Endothelial cell of umbilical vein (primary cell): ENCODE measurements at regions of chr1 and their contacts with region 1.

Region 1: GRCh38 chr1:31564134-31564989 is 12.0 kb upstream of the TINAGL1 start:
- DNase-seq: peak; percentile 83
- H3K4me3 ChIP-seq: no peak overlapping the region
- H3K27ac ChIP-seq: no peak overlapping the region
- H3K4me1 ChIP-seq: peaks cover 19% of the 10 kb centered on the region
- H3K27me3 ChIP-seq: no peaks in the 10 kb centered on the region
- CTCF ChIP-seq: peak; percentile 74 to 76
- POLR2A ChIP-seq: no peak

Region 2: GRCh38 chr1:31593770-31594632 is 29.6 kb after region 1 on chr1:
- CTCF ChIA-PET with region 1: interaction called, 73 read pairs
- POLR2A ChIA-PET with region 1: no interaction called
- dilution Hi-C with region 1: no loop called
- intact Hi-C with region 1: loop called (anchors 1 kb)
- DNase-seq: peak; percentile 73
- H3K4me3 ChIP-seq: no peak overlapping the region
- H3K27ac ChIP-seq: no peak overlapping the region
- H3K4me1 ChIP-seq: peaks cover 28% of the 10 kb centered on the region
- H3K27me3 ChIP-seq: no peaks in the 10 kb centered on the region
- CTCF ChIP-seq: peak; percentile 95 to 96
- POLR2A ChIP-seq: no peak

Region 3: DNA sequence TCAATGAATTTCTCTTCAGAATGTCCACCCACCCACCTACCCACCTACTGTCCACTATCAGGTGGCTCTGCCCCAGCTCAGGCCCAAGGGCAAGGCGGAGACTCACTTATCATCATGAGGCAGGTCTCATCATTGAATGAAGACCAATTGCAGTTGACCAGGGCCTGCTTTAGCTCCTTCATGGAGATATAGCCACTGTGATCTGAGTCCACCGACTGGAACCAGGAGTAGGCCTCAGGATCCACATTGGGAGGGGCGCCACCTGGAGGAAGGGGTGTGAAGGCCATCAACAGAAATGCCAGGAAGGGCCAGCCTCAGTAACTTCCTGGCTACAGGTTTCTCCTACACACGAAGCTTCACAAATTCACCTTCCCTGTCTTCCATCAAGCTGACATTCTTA is 68.7 kb after region 1 on chr1:
- CTCF ChIA-PET with region 1: interaction called, 13 read pairs
- POLR2A ChIA-PET with region 1: no interaction called
- dilution Hi-C with region 1: no loop called
- intact Hi-C with region 1: no loop called
- DNase-seq: no peak
- H3K4me3 ChIP-seq: no peak overlapping the region
- H3K27ac ChIP-seq: no peak overlapping the region
- H3K4me1 ChIP-seq: no peaks in the 10 kb centered on the region
- H3K27me3 ChIP-seq: no peaks in the 10 kb centered on the region
- CTCF ChIP-seq: peak; percentile 53 to 61
- POLR2A ChIP-seq: no peak